ENCODE measurements at regions of chr13 and their contacts with region 1.

Region 1: GRCh38 chr13:30132623-30133553 is 174.5 kb downstream of the KATNAL1 start:
- DNase-seq: peak; percentile 93 to 99 (median 98)
- ATAC-seq: peak; percentile 100
- H3K4me3 ChIP-seq: no peak overlapping the region
- H3K4me3 Mint-ChIP-seq: peak overlapping the region; percentile 22
- H3K27ac ChIP-seq: no peak overlapping the region
- H3K27ac Mint-ChIP-seq: no peak overlapping the region
- H3K4me1 ChIP-seq: peaks cover 13% of the 10 kb centered on the region
- H3K4me1 Mint-ChIP-seq: peaks cover 15% of the 10 kb centered on the region
- H3K27me3 ChIP-seq: no peaks in the 10 kb centered on the region
- H3K27me3 Mint-ChIP-seq: no peaks in the 10 kb centered on the region
- CTCF ChIP-seq: peak; percentile 84

Region 2: DNA sequence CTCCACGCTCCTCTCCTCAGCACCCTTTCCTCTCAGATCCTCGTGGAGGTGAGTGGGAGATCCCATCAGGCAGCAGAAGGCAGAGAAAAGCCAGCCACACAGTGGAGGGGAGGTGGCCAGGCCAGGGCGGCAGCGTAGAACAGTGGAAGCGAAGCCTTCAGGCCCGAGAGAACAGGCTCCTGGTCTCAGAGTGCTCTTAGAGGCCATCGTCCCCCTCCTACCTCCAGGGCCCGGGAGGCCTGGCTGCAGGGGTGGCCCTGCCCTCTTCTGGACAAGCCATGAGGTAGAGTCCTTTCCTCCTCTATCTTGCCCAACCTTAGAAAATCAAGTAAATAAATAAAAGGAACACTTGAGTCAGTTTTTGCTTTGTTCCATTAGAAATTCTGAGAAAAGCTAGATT is 27.5 kb before region 1 on chr13:
- CTCF ChIA-PET with region 1: no interaction called
- POLR2A ChIA-PET with region 1: no interaction called
- intact Hi-C with region 1: no loop called
- DNase-seq: no peak
- ATAC-seq: no peak
- H3K4me3 ChIP-seq: no peak overlapping the region
- H3K4me3 Mint-ChIP-seq: no peak overlapping the region
- H3K27ac ChIP-seq: no peak overlapping the region
- H3K27ac Mint-ChIP-seq: no peak overlapping the region
- H3K4me1 ChIP-seq: no peaks in the 10 kb centered on the region
- H3K4me1 Mint-ChIP-seq: no peaks in the 10 kb centered on the region
- H3K27me3 ChIP-seq: no peaks in the 10 kb centered on the region
- H3K27me3 Mint-ChIP-seq: no peaks in the 10 kb centered on the region
- CTCF ChIP-seq: no peak

Region 3: GRCh38 chr13:30121666-30122065 is 11.2 kb before region 1 on chr13:
- CTCF ChIA-PET with region 1: interaction called, 20 read pairs
- POLR2A ChIA-PET with region 1: interaction called, 3 read pairs
- intact Hi-C with region 1: no loop called
- DNase-seq: no peak
- ATAC-seq: no peak
- H3K4me3 ChIP-seq: no peak overlapping the region
- H3K4me3 Mint-ChIP-seq: no peak overlapping the region
- H3K27ac ChIP-seq: no peak overlapping the region
- H3K27ac Mint-ChIP-seq: no peak overlapping the region
- H3K4me1 ChIP-seq: peaks cover 20% of the 10 kb centered on the region
- H3K4me1 Mint-ChIP-seq: peaks cover 47% of the 10 kb centered on the region
- H3K27me3 ChIP-seq: no peaks in the 10 kb centered on the region
- H3K27me3 Mint-ChIP-seq: no peaks in the 10 kb centered on the region
- CTCF ChIP-seq: no peak

Region 4: GRCh38 chr13:30204564-30204963 is 71.7 kb after region 1 on chr13:
- CTCF ChIA-PET with region 1: no interaction called
- POLR2A ChIA-PET with region 1: no interaction called
- intact Hi-C with region 1: no loop called
- DNase-seq: no peak
- ATAC-seq: no peak
- H3K4me3 ChIP-seq: no peak overlapping the region
- H3K4me3 Mint-ChIP-seq: no peak overlapping the region
- H3K27ac ChIP-seq: no peak overlapping the region
- H3K27ac Mint-ChIP-seq: no peak overlapping the region
- H3K4me1 ChIP-seq: no peaks in the 10 kb centered on the region
- H3K4me1 Mint-ChIP-seq: peaks cover 7% of the 10 kb centered on the region
- H3K27me3 ChIP-seq: no peaks in the 10 kb centered on the region
- H3K27me3 Mint-ChIP-seq: no peaks in the 10 kb centered on the region
- CTCF ChIP-seq: no peak

Region 5: GRCh38 chr13:30306762-30307193 is 173.9 kb after region 1 on chr13:
- CTCF ChIA-PET with region 1: interaction called, 10 read pairs
- POLR2A ChIA-PET with region 1: interaction called, 5 read pairs
- intact Hi-C with region 1: loop called in 1 of 2 experiments (anchors 5 kb)
- DNase-seq: peak; percentile 81 to 94 (median 88)
- ATAC-seq: peak; percentile 85
- H3K4me3 ChIP-seq: peak overlapping the region; percentile 86
- H3K4me3 Mint-ChIP-seq: peak overlapping the region; percentile 92
- H3K27ac ChIP-seq: peak overlapping the region; percentile 41 to 47
- H3K27ac Mint-ChIP-seq: peak overlapping the region; percentile 68
- H3K4me1 ChIP-seq: peaks cover 12% of the 10 kb centered on the region
- H3K4me1 Mint-ChIP-seq: peaks cover 12% of the 10 kb centered on the region
- H3K27me3 ChIP-seq: no peaks in the 10 kb centered on the region
- H3K27me3 Mint-ChIP-seq: no peaks in the 10 kb centered on the region
- CTCF ChIP-seq: no peak

Region 6: GRCh38 chr13:30551189-30551588 is 418.3 kb after region 1 on chr13:
- CTCF ChIA-PET with region 1: interaction called, 4 read pairs
- POLR2A ChIA-PET with region 1: no interaction called
- intact Hi-C with region 1: loop called (anchors 1 kb)
- DNase-seq: peak in 4 of 14 experiments; percentile 34 to 66 (median 57)
- ATAC-seq: peak; percentile 95
- H3K4me3 ChIP-seq: no peak overlapping the region
- H3K4me3 Mint-ChIP-seq: no peak overlapping the region
- H3K27ac ChIP-seq: no peak overlapping the region
- H3K27ac Mint-ChIP-seq: no peak overlapping the region
- H3K4me1 ChIP-seq: no peaks in the 10 kb centered on the region
- H3K4me1 Mint-ChIP-seq: peaks cover 3% of the 10 kb centered on the region
- H3K27me3 ChIP-seq: no peaks in the 10 kb centered on the region
- H3K27me3 Mint-ChIP-seq: no peaks in the 10 kb centered on the region
- CTCF ChIP-seq: peak; percentile 51

Region 7: GRCh38 chr13:30581582-30581981 is 448.7 kb after region 1 on chr13:
- CTCF ChIA-PET with region 1: interaction called, 11 read pairs
- POLR2A ChIA-PET with region 1: interaction called, 3 read pairs
- intact Hi-C with region 1: no loop called
- DNase-seq: peak in 4 of 14 experiments; percentile 47 to 57 (median 48)
- ATAC-seq: no peak
- H3K4me3 ChIP-seq: no peak overlapping the region
- H3K4me3 Mint-ChIP-seq: no peak overlapping the region
- H3K27ac ChIP-seq: no peak overlapping the region
- H3K27ac Mint-ChIP-seq: no peak overlapping the region
- H3K4me1 ChIP-seq: peaks cover 10% of the 10 kb centered on the region
- H3K4me1 Mint-ChIP-seq: peaks cover 18% of the 10 kb centered on the region
- H3K27me3 ChIP-seq: no peaks in the 10 kb centered on the region
- H3K27me3 Mint-ChIP-seq: no peaks in the 10 kb centered on the region
- CTCF ChIP-seq: peak; percentile 28

Measured in CD4-positive, alpha-beta T cell (primary cell).